ENCODE measurements at regions of chr20 and their contacts with region 1.

Region 1: DNA sequence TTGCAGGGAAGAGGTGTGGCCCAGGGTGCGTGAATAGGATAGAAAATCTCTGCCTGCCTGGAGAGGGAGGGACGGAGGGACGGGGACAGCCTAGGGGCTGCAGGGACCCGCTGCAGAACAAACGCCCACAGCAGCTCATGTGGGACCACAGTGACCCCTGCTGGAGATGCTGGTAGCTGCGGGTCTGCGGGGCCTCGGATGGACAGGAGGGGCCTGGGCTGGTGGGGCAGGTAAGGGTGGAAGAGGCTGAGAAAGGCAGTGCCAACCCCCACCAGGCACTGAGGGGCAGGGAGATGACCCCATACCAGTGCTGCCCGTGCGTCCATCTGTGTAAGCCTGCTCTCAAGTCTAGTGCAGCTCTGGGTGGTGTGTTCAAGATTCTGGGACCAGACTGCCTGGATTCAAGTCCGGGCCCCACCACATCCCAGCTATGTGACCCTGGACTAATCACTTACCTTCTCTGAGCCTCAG is 39.4 kb downstream of the KIAA1755 start:
- DNase-seq: peak; percentile 95
- ATAC-seq: peak; percentile 95
- H3K4me3 Mint-ChIP-seq: no peak overlapping the region
- H3K27ac Mint-ChIP-seq: no peak overlapping the region
- H3K4me1 Mint-ChIP-seq: peaks cover 2% of the 10 kb centered on the region; the same call in 1 of the 2 replicates
- H3K27me3 Mint-ChIP-seq: no peaks in the 10 kb centered on the region; the same call in 1 of the 2 replicates
- CTCF ChIP-seq: peak; percentile 79

Region 2: DNA sequence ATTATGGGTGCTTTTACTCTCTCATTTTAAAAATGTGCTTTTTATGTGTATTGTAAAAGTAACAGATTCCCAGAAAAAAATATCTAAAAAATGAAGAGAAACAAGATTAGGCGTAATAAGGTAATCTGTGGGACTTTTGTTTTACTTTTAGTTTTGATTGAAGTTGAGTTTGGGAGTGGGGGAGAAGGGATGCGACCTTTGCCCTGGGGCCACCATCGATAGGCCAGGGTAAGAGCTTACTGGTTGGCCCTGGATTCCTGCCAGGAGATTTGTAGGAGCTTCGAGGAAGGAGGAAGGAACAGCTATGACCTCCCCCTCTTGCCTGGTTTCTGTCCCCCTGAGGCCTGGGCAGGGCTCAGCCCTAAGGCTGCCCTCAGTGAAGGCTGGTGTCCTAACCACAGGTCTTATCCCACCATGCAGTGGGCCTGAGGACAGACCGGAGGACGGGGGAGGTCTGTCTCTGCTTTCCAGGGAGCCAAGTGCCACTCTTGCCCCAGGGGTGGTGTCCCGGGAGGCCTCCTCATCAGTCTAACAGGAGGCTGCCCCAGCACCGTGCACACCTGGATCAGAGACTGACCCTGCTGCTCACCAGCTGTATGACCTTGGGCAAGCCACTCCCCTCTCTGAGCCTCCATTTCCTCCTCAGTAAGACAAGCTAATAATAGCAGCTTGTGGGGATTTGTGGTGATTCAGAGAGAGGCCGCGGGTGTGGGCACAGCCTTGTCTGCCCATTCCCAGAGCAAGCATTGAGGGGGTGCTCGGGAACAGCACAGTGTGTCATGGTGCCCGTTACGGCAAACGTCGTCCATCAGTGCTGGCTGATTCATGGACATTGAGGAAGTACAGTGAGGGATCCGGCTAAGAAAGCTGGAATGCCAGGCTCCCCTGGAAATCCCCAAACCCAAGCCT is 77.3 kb before region 1 on chr20:
- CTCF ChIA-PET with region 1: interaction called, 11 read pairs
- POLR2A ChIA-PET with region 1: no interaction called
- DNase-seq: no peak
- ATAC-seq: no peak
- H3K4me3 Mint-ChIP-seq: no peak overlapping the region
- H3K27ac Mint-ChIP-seq: no peak overlapping the region
- H3K4me1 Mint-ChIP-seq: peaks cover 43% of the 10 kb centered on the region
- H3K27me3 Mint-ChIP-seq: no peaks in the 10 kb centered on the region; the same call in 1 of the 2 replicates
- CTCF ChIP-seq: no peak

Region 3: DNA sequence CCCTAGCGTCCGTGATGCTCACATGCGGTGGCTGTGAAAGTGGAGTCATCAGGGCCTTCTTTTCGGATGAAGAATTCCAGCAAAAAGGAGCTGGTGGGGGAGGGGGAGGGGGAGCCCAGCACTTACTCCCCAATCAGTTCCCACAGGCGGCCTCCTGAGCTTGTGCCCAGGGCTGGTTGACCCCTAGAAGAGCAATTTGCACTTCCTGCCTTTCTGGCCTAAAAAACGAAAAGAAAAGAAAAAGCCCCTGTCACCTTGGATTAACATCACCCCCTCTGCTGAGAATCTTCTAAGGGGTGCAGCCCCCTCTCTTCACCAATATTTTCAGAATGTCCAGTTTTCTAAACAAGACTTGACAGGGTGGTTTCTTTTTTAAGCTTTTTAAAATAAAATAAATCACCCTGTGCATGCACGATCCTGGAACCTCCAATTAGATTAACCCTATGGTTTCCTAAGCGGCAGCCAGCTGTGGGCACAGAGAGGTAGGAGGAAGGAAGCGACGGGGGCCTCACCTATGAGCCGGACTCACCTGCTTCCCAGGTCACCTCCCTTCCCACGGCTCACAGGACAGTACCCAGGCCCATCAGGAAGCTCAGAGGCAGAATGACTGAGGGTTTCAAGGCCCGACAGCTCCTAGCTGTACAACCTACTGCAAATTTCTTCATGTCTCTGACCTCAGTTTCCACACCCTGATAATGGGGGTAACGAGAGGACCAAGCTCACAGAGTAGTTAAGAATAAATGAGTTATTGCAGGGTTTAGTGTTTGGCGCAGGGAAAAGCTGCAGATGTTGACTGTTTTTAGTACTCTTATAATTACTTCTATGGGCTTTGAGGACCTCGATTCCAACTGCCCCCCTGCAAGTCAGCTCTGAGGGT is 45.6 kb before region 1 on chr20:
- CTCF ChIA-PET with region 1: interaction called, 15 read pairs
- POLR2A ChIA-PET with region 1: no interaction called
- DNase-seq: no peak
- ATAC-seq: no peak; the same call in 1 of the 2 replicates
- H3K4me3 Mint-ChIP-seq: no peak overlapping the region
- H3K27ac Mint-ChIP-seq: no peak overlapping the region
- H3K4me1 Mint-ChIP-seq: peaks cover 4% of the 10 kb centered on the region; the same call in 1 of the 2 replicates
- H3K27me3 Mint-ChIP-seq: no peaks in the 10 kb centered on the region
- CTCF ChIP-seq: no peak

Region 4: DNA sequence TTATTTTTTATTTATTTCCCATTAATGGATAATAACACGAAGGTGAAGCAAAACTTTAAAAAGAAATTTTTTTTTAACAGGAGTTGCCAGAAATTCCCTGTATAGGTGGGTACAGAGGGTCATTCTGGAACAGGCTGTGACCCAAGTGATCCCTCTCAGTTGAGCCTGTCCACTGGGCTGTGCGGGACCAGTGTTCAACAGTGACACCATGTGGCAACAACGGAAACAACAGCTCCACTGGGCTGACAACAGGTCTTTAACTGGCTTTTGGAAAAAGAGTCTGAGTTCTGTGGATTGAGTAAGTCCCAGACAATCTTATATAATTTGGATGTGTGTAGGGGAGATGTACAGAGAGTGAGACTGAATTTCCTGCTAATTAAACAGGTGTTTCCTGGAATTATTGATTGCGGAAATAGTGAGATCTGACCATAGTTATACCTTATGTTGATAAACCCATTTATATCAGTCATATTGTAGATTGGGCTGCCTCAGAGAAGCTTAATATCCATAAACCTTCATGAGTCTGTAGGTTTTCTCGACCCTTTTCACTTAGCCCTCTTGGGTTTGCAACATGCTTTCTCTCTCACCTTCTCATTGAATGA is 21.8 kb after region 1 on chr20:
- CTCF ChIA-PET with region 1: interaction called, 19 read pairs
- POLR2A ChIA-PET with region 1: no interaction called
- DNase-seq: peak; percentile 55
- ATAC-seq: peak; percentile 79
- H3K4me3 Mint-ChIP-seq: no peak overlapping the region
- H3K27ac Mint-ChIP-seq: no peak overlapping the region
- H3K4me1 Mint-ChIP-seq: peaks cover 8% of the 10 kb centered on the region; the same call in 1 of the 2 replicates
- H3K27me3 Mint-ChIP-seq: peaks cover 33% of the 10 kb centered on the region
- CTCF ChIP-seq: peak; percentile 82